ENCODE measurements at regions of chr16 and their contacts with region 1.

Region 1: DNA sequence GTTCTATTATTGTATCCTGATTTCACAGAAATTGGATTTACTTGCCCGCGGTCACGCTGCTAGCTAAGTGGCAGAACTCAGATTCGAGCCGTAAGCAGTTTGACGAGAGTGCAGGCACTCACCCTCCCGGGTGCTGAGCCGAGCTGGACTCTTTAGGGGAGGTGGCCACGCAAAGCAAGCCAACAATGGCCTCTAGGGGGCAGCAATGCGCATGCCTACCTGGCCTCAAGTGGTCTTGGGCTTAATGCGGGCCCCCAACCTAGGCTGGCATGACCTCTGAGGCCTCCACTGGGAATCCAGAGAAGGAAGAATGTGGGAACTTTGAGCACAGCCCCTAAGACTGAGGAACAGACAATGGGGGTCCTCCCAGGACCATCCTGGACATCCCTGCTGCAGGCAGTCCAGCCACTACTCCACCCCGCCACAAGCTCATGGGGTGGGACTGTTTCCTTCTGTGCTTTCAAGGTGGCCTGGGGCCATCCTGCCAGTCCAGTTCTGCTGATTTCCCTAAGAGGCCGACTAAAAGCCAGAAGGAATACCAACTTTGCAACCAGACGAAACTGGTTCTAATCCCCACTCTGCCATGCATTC is 276.5 kb downstream of the XYLT1 start:
- DNase-seq: peak; percentile 18
- H3K4me3 Mint-ChIP-seq: no peak overlapping the region
- H3K27ac Mint-ChIP-seq: no peak overlapping the region
- H3K4me1 Mint-ChIP-seq: peaks cover 4% of the 10 kb centered on the region
- H3K27me3 Mint-ChIP-seq: no peaks in the 10 kb centered on the region

Region 2: GRCh38 chr16:17013038-17013437 is 181.2 kb before region 1 on chr16:
- intact Hi-C with region 1: no loop called
- DNase-seq: no peak
- H3K4me3 Mint-ChIP-seq: peak overlapping the region; percentile 70
- H3K27ac Mint-ChIP-seq: no peak overlapping the region
- H3K4me1 Mint-ChIP-seq: peaks cover 10% of the 10 kb centered on the region
- H3K27me3 Mint-ChIP-seq: peaks cover 11% of the 10 kb centered on the region

Region 3: GRCh38 chr16:17205279-17206211 is 11.3 kb after region 1 on chr16:
- intact Hi-C with region 1: no loop called
- DNase-seq: no peak
- H3K4me3 Mint-ChIP-seq: no peak overlapping the region
- H3K27ac Mint-ChIP-seq: no peak overlapping the region
- H3K4me1 Mint-ChIP-seq: peaks cover 7% of the 10 kb centered on the region
- H3K27me3 Mint-ChIP-seq: no peaks in the 10 kb centered on the region

Region 4: DNA sequence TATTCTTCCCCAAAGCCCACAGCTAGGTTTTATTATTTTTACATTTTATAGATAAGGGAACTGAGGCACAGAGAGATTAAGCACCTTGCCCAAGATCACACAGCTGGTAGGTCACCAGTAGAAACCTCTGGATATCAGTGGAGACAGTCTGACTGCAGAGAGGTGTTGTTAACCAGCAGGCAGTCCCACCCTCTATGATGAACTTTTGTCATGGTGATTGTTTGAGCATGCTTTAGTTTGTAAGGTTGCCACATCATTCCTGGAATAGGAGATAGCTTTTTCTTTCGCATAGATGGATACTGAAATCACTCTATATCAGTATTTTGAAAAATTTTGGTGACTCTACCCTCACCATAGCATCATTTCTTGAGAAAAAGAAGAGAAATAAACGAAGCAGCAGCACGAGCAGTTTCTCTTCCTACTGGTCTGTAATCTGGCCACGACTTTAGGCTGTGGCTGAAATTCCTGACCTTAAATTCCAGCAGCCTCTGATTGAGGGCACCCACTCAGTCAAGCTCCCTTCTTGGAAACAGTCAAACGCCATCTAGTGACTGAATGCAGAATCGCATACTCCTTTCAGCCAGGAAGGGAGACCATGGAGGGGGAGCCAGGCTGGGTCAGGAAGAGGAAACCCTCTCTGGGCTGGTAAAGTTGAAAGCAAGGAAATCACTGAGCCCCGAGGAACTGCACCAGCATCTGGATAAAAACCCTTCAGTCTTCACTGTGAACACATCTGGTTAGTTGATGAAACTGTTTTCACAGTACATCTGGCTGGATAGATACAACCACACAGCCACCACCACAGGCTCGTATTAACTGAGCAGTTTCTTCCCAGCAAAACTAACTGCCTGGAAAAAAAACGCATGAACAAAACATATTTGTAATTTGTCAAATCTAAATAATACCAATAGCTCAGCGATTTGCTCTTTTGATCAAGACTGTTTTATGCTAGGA is 384.9 kb after region 1 on chr16:
- intact Hi-C with region 1: loop called (anchors 1 kb)
- DNase-seq: peak; percentile 43
- H3K4me3 Mint-ChIP-seq: no peak overlapping the region
- H3K27ac Mint-ChIP-seq: no peak overlapping the region
- H3K4me1 Mint-ChIP-seq: peaks cover 6% of the 10 kb centered on the region
- H3K27me3 Mint-ChIP-seq: peaks cover 13% of the 10 kb centered on the region